Heart left ventricle (tissue), 16 donors: ENCODE measurements at regions of chr2 and their contacts with region 1.

Region 1: GRCh38 chr2:106073678-106074406 is 120.3 kb downstream of the UXS1 start:
- DNase-seq: no peak
- ATAC-seq: peak in 1 of 4 donors; percentile 74
- H3K4me3 ChIP-seq: no peak overlapping the region
- H3K27ac ChIP-seq: no peak overlapping the region
- H3K4me1 ChIP-seq: peaks cover 0 to 12% (median 0%) of the 10 kb centered on the region in 12 donors
- H3K27me3 ChIP-seq: no peaks in the 10 kb centered on the region
- CTCF ChIP-seq: no peak
- POLR2A ChIP-seq: no peak

Region 2: GRCh38 chr2:105671156-105671555 is 402.7 kb before region 1 on chr2:
- intact Hi-C with region 1: no loop called
- DNase-seq: peak in 4 of 5 donors; percentile 32 to 68 (median 54)
- ATAC-seq: peak; percentile 51 to 70 (median 60)
- H3K4me3 ChIP-seq: no peak overlapping the region
- H3K27ac ChIP-seq: peak overlapping the region in 2 of 12 donors; percentile 3 to 5
- H3K4me1 ChIP-seq: peaks cover 0 to 19% (median 2%) of the 10 kb centered on the region in 12 donors
- H3K27me3 ChIP-seq: no peaks in the 10 kb centered on the region
- CTCF ChIP-seq: no peak
- POLR2A ChIP-seq: no peak

Region 3: GRCh38 chr2:106004851-106005250 is 69.0 kb before region 1 on chr2:
- intact Hi-C with region 1: loop called in 1 of 10 experiments (anchors 10 kb)
- DNase-seq: no peak
- ATAC-seq: no peak
- H3K4me3 ChIP-seq: no peak overlapping the region
- H3K27ac ChIP-seq: no peak overlapping the region
- H3K4me1 ChIP-seq: peaks cover 0 to 9% (median 0%) of the 10 kb centered on the region in 12 donors
- H3K27me3 ChIP-seq: no peaks in the 10 kb centered on the region
- CTCF ChIP-seq: no peak
- POLR2A ChIP-seq: no peak